ENCODE measurements at regions of chrX and their contacts with region 1.

Region 1: GRCh38 chrX:24364851-24365538 is 4.6 kb downstream of the SUPT20HL1 start:
- DNase-seq: no peak

Region 2: GRCh38 chrX:24259544-24260240 is 105.3 kb before region 1 on chrX:
- intact Hi-C with region 1: loop called (anchors 10 kb)
- DNase-seq: no peak

Region 3: DNA sequence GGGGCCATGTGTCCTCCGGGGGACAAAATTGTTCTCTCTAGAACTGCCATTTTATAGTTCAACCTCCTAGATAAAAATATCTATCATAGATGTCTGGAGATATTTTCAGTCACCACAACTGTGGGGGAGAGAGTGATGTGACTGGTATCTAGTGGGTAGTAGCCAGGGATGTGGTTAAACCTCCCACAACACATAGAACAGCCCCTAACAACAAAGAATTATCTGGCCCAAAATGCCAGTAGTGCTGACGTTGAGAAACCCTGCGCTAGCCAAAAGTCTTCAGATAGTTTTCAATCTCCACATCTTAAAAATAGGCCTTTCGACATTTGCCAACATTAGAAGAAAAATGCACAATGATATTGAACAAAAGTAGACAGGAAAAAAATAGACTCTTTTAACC is 32.1 kb before region 1 on chrX:
- intact Hi-C with region 1: no loop called
- DNase-seq: no peak